Spleen (tissue), 13 donors: ENCODE measurements at regions of chr20 and their contacts with region 1.

Region 1: DNA sequence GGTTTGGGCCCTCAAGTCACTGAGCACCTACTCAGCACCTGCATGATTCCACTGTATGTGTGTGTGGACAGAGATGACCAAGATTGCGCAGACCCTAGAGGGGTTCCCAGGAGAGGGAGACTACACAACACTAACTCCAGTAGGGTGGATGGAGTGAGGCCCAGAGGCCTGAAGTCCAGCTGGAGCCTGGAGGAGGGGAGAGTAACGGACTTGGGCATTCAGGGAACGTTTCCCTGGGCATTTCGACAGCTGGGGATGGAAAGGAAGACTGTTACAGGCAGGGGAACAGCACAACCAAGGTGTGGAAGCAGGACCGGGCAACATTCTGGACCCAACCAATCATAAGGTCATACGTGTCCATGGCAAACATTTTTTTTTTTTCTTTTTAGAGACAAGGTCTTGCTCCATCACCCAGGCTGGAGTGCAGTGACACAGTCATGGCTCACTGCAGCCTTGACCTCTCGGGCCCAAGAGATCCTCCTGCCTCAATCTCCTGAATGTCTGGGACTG is 11.1 kb upstream of the CEBPB start:
- DNase-seq: no peak
- H3K4me3 ChIP-seq: no peak overlapping the region
- H3K27ac ChIP-seq: no peak overlapping the region
- H3K4me1 ChIP-seq: peaks cover 0 to 6% (median 2%) of the 10 kb centered on the region in 6 donors
- H3K27me3 ChIP-seq: no peaks in the 10 kb centered on the region
- CTCF ChIP-seq: peak in 6 of 11 experiments; percentile 41 to 75 (median 60)
- POLR2A ChIP-seq: no peak

Region 2: DNA sequence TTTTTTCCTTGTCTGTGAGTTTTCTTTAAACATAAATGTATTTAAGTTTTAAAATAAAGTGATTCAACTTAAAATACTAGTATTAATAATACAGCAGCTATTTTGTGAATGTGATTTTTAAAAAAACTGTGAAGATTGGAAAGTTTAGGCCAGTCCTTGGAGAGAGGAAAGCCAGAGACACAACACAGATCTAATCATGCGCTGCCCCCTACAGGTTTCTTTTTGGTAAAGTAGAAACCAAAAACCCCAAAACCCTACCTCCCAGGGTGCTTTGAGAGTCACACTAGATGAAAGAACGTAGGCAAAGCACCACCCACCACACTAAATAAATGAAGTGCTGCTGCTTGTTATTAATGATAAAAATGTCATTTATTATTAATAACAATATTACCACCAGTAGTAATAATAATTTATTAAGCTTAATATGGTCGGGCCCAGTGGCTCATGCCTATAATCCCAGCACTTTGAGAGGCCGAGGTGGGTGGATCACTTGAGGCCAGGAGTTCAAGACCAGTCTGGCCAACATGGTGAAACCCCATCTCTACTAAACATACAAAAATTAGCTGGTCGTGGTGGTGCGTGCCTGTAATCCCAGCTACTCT is 333.3 kb before region 1 on chr20:
- intact Hi-C with region 1: no loop called
- DNase-seq: no peak
- H3K4me3 ChIP-seq: no peak overlapping the region
- H3K27ac ChIP-seq: peak overlapping the region in 5 of 8 donors; percentile 29 to 72 (median 56)
- H3K4me1 ChIP-seq: peaks cover 0 to 61% (median 18%) of the 10 kb centered on the region in 6 donors
- H3K27me3 ChIP-seq: no peaks in the 10 kb centered on the region
- CTCF ChIP-seq: peak in 10 of 11 experiments; percentile 22 to 81 (median 70)
- POLR2A ChIP-seq: no peak

Region 3: GRCh38 chr20:50085452-50086365 is 93.9 kb before region 1 on chr20:
- intact Hi-C with region 1: no loop called
- DNase-seq: no peak
- H3K4me3 ChIP-seq: peak overlapping the region in 4 of 8 donors; percentile 8 to 63 (median 32)
- H3K27ac ChIP-seq: peak overlapping the region in 6 of 8 donors; percentile 34 to 78 (median 65)
- H3K4me1 ChIP-seq: peaks cover 17 to 52% (median 25%) of the 10 kb centered on the region in 6 donors
- H3K27me3 ChIP-seq: no peaks in the 10 kb centered on the region
- CTCF ChIP-seq: peak; percentile 37 to 82 (median 74)
- POLR2A ChIP-seq: no peak

Region 4: DNA sequence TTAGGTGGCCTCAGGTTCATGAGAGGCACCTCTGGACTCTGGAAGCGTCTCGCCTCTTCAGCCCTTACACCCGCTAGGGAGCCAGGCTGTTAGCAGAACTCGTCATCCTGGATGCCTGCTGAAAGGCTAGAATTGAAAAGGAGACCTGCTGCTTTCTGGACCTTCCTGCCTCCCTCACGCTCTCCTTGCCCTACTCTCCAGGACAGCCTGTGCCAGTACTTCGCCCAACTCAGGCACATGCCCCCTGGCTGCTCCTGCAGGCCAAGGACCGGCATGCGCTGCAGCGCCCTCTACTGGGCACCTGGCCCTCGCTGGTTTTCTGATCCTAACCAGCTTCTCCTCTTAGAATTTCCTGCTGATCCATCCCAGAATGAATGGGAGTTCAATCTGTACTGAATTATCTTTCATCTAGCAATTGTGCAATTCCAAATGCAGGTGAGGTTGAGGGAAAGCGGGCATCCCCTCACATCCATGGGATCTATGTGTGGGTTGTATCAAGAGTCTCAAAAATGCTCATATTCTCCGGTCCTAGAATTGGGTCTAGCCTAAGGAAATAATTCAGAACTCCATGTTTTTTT is 408.6 kb after region 1 on chr20:
- intact Hi-C with region 1: loop called (anchors 5 kb)
- DNase-seq: peak; percentile 92
- H3K4me3 ChIP-seq: no peak overlapping the region
- H3K27ac ChIP-seq: peak overlapping the region in 2 of 8 donors; percentile 15
- H3K4me1 ChIP-seq: peaks cover 0 to 49% (median 21%) of the 10 kb centered on the region in 6 donors
- H3K27me3 ChIP-seq: no peaks in the 10 kb centered on the region
- CTCF ChIP-seq: peak; percentile 41 to 89 (median 78)
- POLR2A ChIP-seq: no peak